ENCODE measurements at regions of chr3 and their contacts with region 1.

Region 1: DNA sequence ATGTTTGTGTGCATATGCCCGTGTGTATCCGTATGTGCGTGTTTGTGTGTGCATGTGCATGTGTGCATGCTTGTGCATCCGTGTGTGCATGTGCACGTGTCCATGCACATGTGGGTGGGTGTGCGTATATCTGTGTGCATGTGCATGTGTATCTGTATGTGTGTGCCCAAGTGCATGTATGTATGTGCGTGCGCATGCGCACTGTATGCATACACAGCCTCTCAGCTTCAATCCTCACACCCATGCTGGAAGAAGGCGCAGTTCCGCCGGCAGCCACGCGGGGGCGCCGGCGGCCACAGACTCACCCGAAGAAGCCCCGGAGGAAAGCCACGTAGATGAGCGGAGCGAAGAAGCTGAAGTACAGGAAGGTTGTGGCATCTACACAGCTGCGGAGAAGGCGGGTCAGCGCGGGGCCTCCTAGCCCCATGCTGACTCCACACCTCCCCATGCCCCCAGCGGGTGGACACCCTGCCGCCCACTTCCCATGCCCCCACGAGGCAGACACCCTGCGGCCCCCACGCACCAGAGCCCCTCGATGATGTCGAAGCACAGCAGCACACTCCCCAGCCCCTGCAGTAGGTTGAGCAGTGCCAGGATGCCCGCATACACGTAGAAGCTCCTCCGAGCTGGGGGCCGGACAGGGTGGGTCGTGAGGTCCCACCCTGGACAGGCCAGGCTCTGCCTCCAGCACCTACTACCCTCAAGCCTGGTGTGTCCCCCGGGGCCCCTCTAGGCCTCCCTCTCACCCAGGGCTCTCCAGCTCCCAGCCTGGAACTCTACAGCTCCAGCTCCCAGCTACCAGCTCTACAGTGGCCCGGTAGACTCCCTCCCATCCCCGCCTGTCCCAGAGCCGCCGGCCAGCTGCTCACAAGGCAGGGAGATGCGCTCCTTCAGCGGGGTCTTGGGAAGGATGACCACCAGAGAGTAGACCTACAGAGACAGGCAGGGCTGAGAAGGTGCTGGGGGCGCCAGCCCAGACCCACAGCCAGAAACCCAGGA is 15.4 kb downstream of the TPRA1 start:
- DNase-seq: peak; percentile 86
- H3K4me3 Mint-ChIP-seq: no peak overlapping the region
- H3K27ac Mint-ChIP-seq: no peak overlapping the region
- H3K4me1 Mint-ChIP-seq: peaks cover 6% of the 10 kb centered on the region
- H3K27me3 Mint-ChIP-seq: no peaks in the 10 kb centered on the region

Region 2: GRCh38 chr3:126494204-126494969 is 1080.8 kb before region 1 on chr3:
- CTCF ChIA-PET with region 1: no interaction called
- intact Hi-C with region 1: no loop called
- DNase-seq: no peak
- H3K4me3 Mint-ChIP-seq: no peak overlapping the region
- H3K27ac Mint-ChIP-seq: no peak overlapping the region
- H3K4me1 Mint-ChIP-seq: peaks cover 3% of the 10 kb centered on the region
- H3K27me3 Mint-ChIP-seq: no peaks in the 10 kb centered on the region

Region 3: DNA sequence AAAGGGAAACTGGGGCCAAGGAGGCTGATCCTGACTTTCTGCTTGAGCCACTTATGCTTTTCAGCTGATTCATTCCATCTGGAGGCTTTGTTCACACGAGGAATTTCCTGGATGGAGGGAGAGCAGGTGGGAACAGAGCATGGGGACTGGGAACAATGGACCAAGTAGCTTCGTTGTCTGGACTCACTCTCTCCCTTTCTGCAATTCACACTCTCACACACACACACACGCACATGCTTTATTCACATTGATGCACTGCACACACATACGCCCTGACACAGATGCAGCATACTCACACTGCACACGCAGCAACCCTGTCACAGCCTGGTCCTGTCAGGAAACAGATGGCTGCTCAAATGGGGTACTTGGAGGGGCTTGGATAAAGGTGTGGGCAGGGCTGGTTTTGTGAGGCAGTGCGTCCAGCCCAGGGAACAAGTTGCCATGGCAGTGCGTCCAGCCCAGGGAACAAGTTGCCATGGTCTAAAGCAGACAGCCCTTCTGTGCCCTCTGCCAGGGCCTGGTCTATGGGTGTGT is 890.9 kb before region 1 on chr3:
- CTCF ChIA-PET with region 1: no interaction called
- intact Hi-C with region 1: no loop called
- DNase-seq: no peak
- H3K4me3 Mint-ChIP-seq: no peak overlapping the region
- H3K27ac Mint-ChIP-seq: no peak overlapping the region
- H3K4me1 Mint-ChIP-seq: no peaks in the 10 kb centered on the region
- H3K27me3 Mint-ChIP-seq: no peaks in the 10 kb centered on the region

Region 4: DNA sequence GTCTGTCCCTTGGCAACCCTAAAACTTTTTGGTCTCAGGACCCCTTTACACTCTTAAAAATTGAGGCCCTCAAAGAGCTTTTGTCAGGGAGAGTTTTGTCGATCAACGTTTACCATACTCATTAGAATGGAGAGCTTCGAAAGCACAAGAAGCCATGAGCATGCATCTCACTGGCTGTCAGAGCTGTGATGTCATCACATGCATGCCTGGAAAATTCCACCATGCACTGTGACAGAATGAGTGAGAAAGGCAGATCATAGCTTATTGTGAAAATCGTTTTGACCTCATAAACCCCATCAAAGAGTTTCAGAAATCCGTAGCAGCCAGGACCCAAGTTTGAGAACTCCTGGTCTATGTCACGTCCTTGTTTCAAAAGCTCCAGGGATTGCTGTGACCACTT is 12.5 kb before region 1 on chr3:
- CTCF ChIA-PET with region 1: interaction called, 10 read pairs
- intact Hi-C with region 1: no loop called
- DNase-seq: no peak
- H3K4me3 Mint-ChIP-seq: no peak overlapping the region
- H3K27ac Mint-ChIP-seq: no peak overlapping the region
- H3K4me1 Mint-ChIP-seq: peaks cover 7% of the 10 kb centered on the region
- H3K27me3 Mint-ChIP-seq: no peaks in the 10 kb centered on the region

Region 5: GRCh38 chr3:127590593-127591477 is 15.7 kb after region 1 on chr3 and contains the start of gene TPRA1:
- CTCF ChIA-PET with region 1: interaction called, 18 read pairs
- intact Hi-C with region 1: loop called (anchors 1 kb)
- DNase-seq: peak; percentile 84
- H3K4me3 Mint-ChIP-seq: peak within 1 kb of the TSS; percentile 93
- H3K27ac Mint-ChIP-seq: peak within 1 kb of the TSS; percentile 92
- H3K4me1 Mint-ChIP-seq: peaks cover 32% of the 10 kb centered on the region
- H3K27me3 Mint-ChIP-seq: no peaks in the 10 kb centered on the region
- total RNA-seq, gene TPRA1: 15.1 to 15.9 TPM

Region 6: GRCh38 chr3:127672516-127673190 is 97.5 kb after region 1 on chr3 and contains the start of gene ABTB1:
- CTCF ChIA-PET with region 1: interaction called, 3 read pairs
- intact Hi-C with region 1: loop called (anchors 1 kb)
- DNase-seq: peak; percentile 89
- H3K4me3 Mint-ChIP-seq: peak within 1 kb of the TSS; percentile 86
- H3K27ac Mint-ChIP-seq: peak within 1 kb of the TSS; percentile 87
- H3K4me1 Mint-ChIP-seq: peaks cover 21% of the 10 kb centered on the region
- H3K27me3 Mint-ChIP-seq: no peaks in the 10 kb centered on the region
- total RNA-seq, gene ABTB1: 10.6 to 13.5 TPM

Region 7: DNA sequence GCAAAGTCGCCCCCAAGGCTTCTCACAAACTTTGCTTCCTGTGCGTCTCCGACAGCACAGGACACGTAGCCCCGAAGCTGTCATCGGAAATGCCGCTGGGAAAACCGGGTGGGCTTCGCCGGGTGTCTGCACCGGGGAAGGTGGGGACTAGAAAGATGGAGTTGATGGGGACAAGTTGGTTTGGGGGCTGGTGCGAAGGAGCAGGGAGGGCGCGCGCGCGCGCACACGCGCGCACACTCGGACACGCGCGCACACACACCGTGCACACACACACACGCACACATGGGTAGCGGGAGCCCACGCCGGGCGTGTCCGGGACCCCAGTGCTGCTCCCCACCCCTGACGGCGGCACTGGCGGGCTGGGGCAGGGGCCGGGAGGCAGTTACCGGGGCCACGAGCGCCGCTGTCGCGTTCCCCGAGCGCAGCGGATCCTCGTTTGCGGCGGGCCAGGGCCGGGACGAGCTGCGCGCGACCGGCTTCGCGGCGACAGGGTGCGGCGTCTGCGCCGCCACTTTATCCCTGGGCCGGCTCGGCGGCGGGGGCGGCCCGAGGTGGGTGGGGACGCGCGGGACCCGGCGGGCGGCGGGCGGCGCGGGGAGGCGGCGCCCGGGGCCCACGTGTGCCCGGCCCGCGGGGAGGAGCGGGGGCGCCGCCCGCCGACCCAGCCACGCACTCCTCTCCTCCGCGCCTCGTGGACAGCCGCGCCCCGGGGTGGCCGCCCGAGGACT is 247.7 kb after region 1 on chr3:
- CTCF ChIA-PET with region 1: no interaction called
- intact Hi-C with region 1: loop called (anchors 10 kb)
- DNase-seq: peak; percentile 8
- H3K4me3 Mint-ChIP-seq: peak overlapping the region; percentile 68
- H3K27ac Mint-ChIP-seq: no peak overlapping the region
- H3K4me1 Mint-ChIP-seq: peaks cover 4% of the 10 kb centered on the region
- H3K27me3 Mint-ChIP-seq: peaks cover 59% of the 10 kb centered on the region

Region 8: GRCh38 chr3:128051837-128052594 is 476.8 kb after region 1 on chr3 and contains the start of gene SEC61A1:
- CTCF ChIA-PET with region 1: no interaction called
- intact Hi-C with region 1: loop called (anchors 5 kb)
- DNase-seq: peak; percentile 95
- H3K4me3 Mint-ChIP-seq: peak within 1 kb of the TSS; percentile 91
- H3K27ac Mint-ChIP-seq: peak within 1 kb of the TSS; percentile 95
- H3K4me1 Mint-ChIP-seq: peaks cover 40% of the 10 kb centered on the region
- H3K27me3 Mint-ChIP-seq: peaks cover under 1% of the 10 kb centered on the region
- total RNA-seq, gene SEC61A1: 115 to 119 TPM